ENCODE measurements at regions of chr6 and their contacts with region 1.

Region 1: DNA sequence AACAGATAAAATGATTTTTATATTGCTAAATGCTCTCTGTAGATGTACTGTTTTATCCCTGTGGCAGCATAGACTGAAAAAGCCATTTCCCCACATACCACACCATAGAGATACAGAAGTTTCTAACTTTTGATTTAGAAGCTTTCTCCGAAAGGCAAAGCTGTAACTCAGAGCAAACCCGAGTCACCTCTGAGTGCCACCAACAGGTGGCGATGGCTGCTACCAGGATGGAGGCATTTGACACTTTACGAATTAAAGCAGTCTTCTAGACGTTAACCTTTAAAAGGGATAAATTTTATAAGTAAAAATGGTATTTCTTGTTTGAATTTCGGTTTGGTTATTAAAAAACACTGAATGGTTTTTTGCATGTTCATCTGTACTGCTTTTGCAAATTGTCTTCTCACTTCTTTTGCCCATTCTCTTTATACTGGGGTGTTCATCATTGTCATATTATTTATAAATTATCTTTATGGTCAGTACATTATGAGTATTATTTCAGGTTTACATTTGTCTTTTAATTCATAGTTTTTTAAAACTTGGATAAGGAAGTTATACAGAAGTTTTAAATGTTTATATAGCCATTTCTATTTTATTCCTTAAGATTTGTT is 201.0 kb upstream of the CEP162 start:
- DNase-seq: peak; percentile 58 to 89 (median 78)
- ATAC-seq: peak; percentile 29 to 48
- H3K4me3 ChIP-seq: no peak overlapping the region
- H3K27ac ChIP-seq: no peak overlapping the region
- H3K4me1 ChIP-seq: no peaks in the 10 kb centered on the region
- H3K27me3 ChIP-seq: no peaks in the 10 kb centered on the region

Region 2: DNA sequence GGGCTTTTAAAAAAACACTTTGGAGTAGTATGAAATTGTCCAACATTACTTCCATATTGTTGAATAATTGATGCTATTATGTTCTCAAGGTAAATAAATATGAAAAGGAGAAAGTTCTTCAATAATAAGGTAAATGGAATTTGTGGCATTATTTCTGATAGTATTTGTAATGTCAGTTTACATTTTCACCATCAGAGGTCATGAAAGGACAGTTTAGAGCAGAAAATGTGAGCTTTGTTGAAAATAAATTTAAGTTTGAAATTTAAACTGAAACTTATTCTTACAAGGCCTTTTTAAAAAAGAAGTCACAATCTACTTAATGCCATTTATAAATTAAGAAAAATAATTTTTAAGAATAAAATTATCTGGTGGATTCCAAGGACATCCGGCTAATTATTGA is 185.2 kb before region 1 on chr6:
- intact Hi-C with region 1: no loop called
- DNase-seq: no peak
- ATAC-seq: no peak
- H3K4me3 ChIP-seq: no peak overlapping the region
- H3K27ac ChIP-seq: no peak overlapping the region
- H3K4me1 ChIP-seq: no peaks in the 10 kb centered on the region
- H3K27me3 ChIP-seq: no peaks in the 10 kb centered on the region

Region 3: DNA sequence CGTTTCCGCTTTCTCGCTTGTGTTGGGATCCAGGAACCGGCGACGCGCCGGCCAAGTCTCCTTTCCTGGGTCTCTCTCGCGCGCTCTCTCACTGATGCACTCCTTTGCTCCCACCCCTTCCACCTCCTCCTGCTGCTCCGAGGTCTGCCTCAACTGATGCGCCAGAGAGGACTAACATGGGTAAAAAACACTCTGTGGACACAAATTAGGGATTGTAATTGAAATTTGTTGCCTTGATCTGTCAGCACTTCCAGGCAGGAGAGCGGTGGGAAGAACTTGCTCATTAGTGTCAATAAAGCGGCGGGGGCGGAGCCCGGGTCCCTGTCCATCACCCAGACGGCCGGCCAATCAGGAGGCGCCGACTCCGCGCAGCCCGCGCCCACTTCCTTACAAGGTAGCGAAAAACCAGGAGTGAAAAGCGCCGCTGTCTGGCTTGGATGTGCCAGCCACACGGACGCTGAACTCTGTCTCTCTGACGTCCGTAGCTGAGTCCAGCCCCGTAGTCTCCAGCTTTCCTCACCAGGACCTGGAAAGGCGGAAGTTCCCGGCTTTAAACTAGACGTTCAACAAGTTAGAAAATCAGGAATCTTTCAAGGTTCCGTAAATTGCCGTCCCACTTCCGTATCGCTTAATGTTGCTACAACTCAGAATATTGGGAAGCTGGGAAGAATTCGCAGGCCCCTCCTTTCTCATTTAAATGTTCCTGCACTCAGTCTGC is 336.1 kb after region 1 on chr6 and contains the start of gene TBX18:
- intact Hi-C with region 1: loop called in 1 of 4 experiments (anchors 5 kb)
- DNase-seq: peak; percentile 95 to 99 (median 97)
- ATAC-seq: peak; percentile 93 to 95
- H3K4me3 ChIP-seq: peak within 1 kb of the TSS; percentile 83
- H3K27ac ChIP-seq: peak within 1 kb of the TSS; percentile 98
- H3K4me1 ChIP-seq: no peaks in the 10 kb centered on the region
- H3K27me3 ChIP-seq: no peaks in the 10 kb centered on the region
- total RNA-seq, gene TBX18: 8.7 to 10.4 (median 9.5) TPM

Region 4: GRCh38 chr6:84774157-84774984 is 346.0 kb after region 1 on chr6:
- intact Hi-C with region 1: loop called in 1 of 4 experiments (anchors 10 kb)
- DNase-seq: peak; percentile 74 to 90 (median 89)
- ATAC-seq: peak; percentile 88 to 92
- H3K4me3 ChIP-seq: peak overlapping the region; percentile 55
- H3K27ac ChIP-seq: peak overlapping the region; percentile 33
- H3K4me1 ChIP-seq: no peaks in the 10 kb centered on the region
- H3K27me3 ChIP-seq: no peaks in the 10 kb centered on the region

Region 5: DNA sequence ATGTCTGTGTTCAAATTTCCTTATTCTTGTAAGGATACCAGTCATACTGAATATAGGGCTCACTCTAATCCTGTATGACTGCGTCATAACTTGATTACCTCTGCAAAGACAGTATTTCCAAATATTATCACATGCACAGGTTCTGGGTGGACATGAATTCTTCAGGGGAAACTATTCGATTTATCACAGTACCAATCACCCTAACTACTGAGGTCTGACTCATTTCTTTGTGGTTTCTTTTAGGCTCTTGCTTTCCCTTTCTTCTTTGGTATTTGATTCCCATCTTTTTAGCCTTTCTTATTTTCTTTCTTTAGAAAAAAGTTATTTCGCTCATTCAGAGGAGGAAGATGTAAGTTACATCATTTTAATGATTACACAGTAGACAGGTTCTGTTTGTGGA is 376.3 kb after region 1 on chr6:
- intact Hi-C with region 1: no loop called
- DNase-seq: no peak
- ATAC-seq: no peak
- H3K4me3 ChIP-seq: no peak overlapping the region
- H3K27ac ChIP-seq: no peak overlapping the region
- H3K4me1 ChIP-seq: no peaks in the 10 kb centered on the region
- H3K27me3 ChIP-seq: no peaks in the 10 kb centered on the region

Measured in right cardiac atrium (tissue), 5 donors.